ENCODE measurements at regions of chr10 and their contacts with region 1.

Region 1: DNA sequence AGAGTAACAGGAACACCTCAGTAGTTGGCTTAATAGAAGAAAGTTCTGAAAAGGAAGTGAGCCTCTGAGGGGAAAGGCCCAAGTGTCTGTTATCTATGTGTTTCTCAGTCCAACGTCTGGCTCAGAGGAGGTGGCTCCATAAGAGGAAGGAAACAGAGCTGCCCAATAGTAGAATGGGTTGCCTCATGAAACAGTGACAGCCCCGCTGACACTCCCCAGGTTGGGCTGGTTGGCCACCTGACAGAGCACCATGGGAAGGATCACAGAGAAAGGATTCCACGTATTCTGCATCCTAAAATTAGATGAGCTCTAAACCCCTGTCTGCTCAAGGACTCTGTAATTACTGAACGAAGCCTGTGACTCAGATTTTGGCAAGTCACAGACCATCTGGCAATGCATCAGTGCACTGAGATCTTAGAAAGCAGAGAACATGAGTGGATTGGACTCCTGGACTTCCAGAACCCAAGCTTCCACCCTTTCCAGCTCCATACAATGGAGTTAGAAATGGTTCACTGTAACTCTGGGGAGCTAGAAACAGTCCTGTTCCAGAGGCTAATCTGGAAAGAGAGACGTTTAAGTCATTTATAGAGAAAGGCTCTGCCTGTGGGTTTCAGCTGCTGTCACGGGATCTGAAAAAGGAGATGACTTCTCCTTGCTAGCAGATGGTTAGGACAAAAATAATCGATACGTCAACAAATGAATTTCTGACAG is 2.9 kb downstream of the PKD2L1 start:
- DNase-seq: peak; percentile 90
- ATAC-seq: peak; percentile 100
- H3K4me3 ChIP-seq: no peak overlapping the region; the same call in 1 of the 2 replicates
- H3K27ac ChIP-seq: peak overlapping the region; percentile 70
- H3K4me1 ChIP-seq: peaks cover 15% of the 10 kb centered on the region
- H3K27me3 ChIP-seq: no peaks in the 10 kb centered on the region; a peak in 1 of 4 replicates
- CTCF ChIP-seq: no peak
- EP300 ChIP-seq: peak in 1 of 2 experiments; percentile 57; a peak in 1 of 4 replicates
- POLR2A ChIP-seq: peak; percentile 19; the same call in 1 of the 2 replicates
- RAD21 ChIP-seq: no peak

Region 2: GRCh38 chr10:100138921-100139496 is 188.2 kb before region 1 on chr10:
- CTCF ChIA-PET with region 1: no interaction called
- POLR2A ChIA-PET with region 1: no interaction called
- RAD21 ChIA-PET with region 1: no interaction called
- SMC1A ChIA-PET with region 1: no interaction called
- in situ Hi-C with region 1: no loop called
- intact Hi-C with region 1: no loop called
- DNase-seq: no peak
- ATAC-seq: no peak
- H3K4me3 ChIP-seq: no peak overlapping the region
- H3K27ac ChIP-seq: no peak overlapping the region
- H3K4me1 ChIP-seq: no peaks in the 10 kb centered on the region
- H3K27me3 ChIP-seq: peaks cover 0 to 2% of the 10 kb centered on the region in 2 experiments; a peak in 1 of 4 replicates
- CTCF ChIP-seq: no peak
- EP300 ChIP-seq: no peak
- POLR2A ChIP-seq: no peak
- RAD21 ChIP-seq: no peak

Region 3: DNA sequence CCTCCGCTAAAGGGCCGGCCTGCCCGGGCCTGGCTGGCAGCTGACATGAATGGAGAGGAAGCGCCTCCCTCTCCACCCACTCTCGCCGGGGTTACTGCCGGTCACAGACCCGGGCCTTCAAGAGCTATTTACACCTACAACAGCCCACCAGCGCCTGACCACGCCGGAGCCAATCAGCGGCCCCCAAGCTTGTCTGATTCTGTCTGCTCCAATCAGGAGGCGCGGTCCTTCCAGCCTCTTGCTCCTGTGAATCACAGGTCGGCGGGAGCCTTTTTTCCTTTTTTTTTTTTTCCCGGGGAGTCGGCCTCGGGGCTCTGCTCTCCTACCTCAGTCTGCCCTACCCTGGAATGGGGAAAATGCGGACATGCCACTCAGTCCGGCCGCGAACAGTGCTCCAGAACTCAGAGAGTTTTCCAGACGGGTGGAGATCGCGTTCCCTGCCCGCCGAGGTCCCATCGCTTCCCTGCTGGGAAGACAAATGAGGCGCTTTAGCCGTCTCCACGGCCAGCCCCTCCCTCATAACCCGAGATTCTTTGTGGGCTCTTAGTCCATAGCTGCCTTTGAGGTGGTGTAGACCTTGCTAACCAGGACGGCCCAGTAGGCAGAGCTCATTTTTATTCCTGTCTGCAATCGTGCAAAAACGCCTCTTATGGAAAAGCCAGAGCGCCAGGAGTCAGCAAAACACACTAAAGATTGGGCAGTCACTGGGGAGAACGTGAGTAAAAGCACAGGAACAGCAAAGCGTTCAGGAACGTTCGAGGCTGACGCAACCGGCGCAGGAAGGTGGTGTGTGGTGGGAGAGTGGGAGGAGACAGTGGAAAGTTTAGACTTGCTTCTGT is 46.4 kb after region 1 on chr10:
- CTCF ChIA-PET with region 1: interaction called, 5 read pairs
- POLR2A ChIA-PET with region 1: interaction called, 17 read pairs
- RAD21 ChIA-PET with region 1: interaction called, 6 read pairs
- SMC1A ChIA-PET with region 1: interaction called, 3 read pairs
- in situ Hi-C with region 1: no loop called
- intact Hi-C with region 1: no loop called
- DNase-seq: peak; percentile 85
- ATAC-seq: peak; percentile 95
- H3K4me3 ChIP-seq: peak overlapping the region; percentile 94
- H3K27ac ChIP-seq: peak overlapping the region; percentile 85
- H3K4me1 ChIP-seq: peaks cover 34% of the 10 kb centered on the region
- H3K27me3 ChIP-seq: no peaks in the 10 kb centered on the region
- CTCF ChIP-seq: no peak
- EP300 ChIP-seq: peak in 1 of 2 experiments; percentile 22; a peak in 1 of 4 replicates
- POLR2A ChIP-seq: peak; percentile 74
- RAD21 ChIP-seq: no peak

Measured in GM12878 (cell line).